Activated T-helper 1 cell treated with anti-CD3 and anti-CD28 coated beads, Interleukin-12 subunit alpha, Interleukin-12 subunit beta, Interleukin-2, Interleukin-4 antibody, amounts not matched to agents 30 ng/mL and 10 ng/mL and 1 ng/mL, durations not matched to agents 14 hours and 24 hours and 36 hours (primary cell): ENCODE measurements at regions of chr7 and their contacts with region 1.

Region 1: DNA sequence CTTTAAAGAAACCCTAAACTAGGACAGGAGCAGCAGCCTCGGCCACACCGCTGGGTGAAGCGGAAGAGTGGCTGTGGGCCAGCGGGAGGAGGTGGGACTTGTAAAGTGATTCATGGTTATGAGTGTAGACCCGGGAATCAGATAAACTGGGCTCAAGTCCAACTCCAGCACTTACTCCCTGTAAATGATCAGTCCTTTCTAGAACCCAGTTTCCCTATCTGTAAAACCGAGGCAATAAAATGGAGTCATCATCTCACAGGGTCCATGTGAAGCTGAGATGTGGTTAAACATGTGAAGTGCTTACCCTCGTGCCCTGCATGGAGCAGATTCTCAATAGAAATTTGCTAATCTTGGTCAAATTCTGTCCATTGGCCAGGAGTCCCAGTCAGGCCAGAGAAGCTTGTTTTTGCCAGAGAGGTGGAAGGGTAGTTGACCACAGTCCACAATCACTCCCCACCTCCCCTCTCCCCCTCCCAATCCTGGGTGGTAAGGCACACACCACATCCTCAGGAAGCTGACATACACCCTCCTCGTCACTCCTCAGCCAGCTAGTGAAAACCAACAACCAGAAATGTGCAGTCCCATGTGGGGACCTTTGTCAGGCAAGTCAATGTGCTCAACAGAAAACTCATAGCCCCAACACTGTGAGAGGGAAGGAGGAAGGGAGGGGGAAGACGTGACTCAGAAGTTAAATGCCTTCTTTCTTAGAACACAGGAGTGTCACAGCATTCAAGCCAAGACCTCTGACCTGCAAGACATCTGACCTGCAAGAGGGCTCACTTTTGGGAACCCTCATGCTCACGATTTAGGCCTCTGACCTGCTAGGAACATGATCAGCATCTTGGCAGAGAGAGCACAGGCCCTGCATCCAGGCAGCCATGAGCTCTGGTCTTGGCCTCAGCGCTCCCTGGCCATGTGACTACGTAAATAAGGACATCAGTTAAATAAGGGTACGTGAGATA is 145.1 kb downstream of the PLXNA4 start:
- DNase-seq: peak; percentile 76
- H3K4me3 Mint-ChIP-seq: peak overlapping the region; percentile 2
- H3K27ac Mint-ChIP-seq: peak overlapping the region; percentile 69
- H3K4me1 Mint-ChIP-seq: peaks cover 74% of the 10 kb centered on the region
- H3K27me3 Mint-ChIP-seq: no peaks in the 10 kb centered on the region

Region 2: GRCh38 chr7:132451161-132451560 is 20.0 kb after region 1 on chr7:
- intact Hi-C with region 1: loop called (anchors 2 kb)
- DNase-seq: no peak
- H3K4me3 Mint-ChIP-seq: no peak overlapping the region
- H3K27ac Mint-ChIP-seq: peak overlapping the region; percentile 22
- H3K4me1 Mint-ChIP-seq: peaks cover 61% of the 10 kb centered on the region
- H3K27me3 Mint-ChIP-seq: peaks cover 11% of the 10 kb centered on the region

Region 3: GRCh38 chr7:132461032-132461592 is 30.0 kb after region 1 on chr7:
- intact Hi-C with region 1: loop called (anchors 2 kb)
- DNase-seq: no peak
- H3K4me3 Mint-ChIP-seq: peak overlapping the region; percentile 16
- H3K27ac Mint-ChIP-seq: peak overlapping the region; percentile 55
- H3K4me1 Mint-ChIP-seq: peaks cover 33% of the 10 kb centered on the region
- H3K27me3 Mint-ChIP-seq: peaks cover 17% of the 10 kb centered on the region